ENCODE measurements at regions of chr16 and their contacts with region 1.

Region 1: DNA sequence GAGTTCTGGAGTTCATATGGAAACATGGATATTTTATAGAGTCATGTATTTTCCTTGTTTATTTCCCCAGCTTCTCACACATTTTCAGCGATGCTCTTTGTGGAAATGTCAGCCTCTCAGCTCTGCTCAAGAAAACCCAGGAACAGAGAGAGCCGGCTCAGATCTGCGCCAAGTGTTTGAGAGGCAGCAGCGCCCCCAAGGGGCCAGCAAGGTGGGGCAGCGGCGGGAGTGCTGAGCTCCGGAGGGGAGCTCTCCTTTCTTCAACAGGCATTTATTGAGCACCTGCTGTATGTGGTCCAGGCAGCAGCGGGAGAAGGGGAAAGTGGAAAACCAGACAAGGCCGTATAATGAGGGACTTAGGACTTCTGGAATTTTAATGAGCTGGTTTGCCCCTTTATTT is 421.1 kb upstream of the C16orf82 start:
- DNase-seq: peak; percentile 73
- H3K4me3 ChIP-seq: no peak overlapping the region
- H3K27ac ChIP-seq: no peak overlapping the region
- H3K4me1 ChIP-seq: peaks cover 10% of the 10 kb centered on the region
- H3K27me3 ChIP-seq: no peaks in the 10 kb centered on the region
- CTCF ChIP-seq: peak; percentile 93

Region 2: DNA sequence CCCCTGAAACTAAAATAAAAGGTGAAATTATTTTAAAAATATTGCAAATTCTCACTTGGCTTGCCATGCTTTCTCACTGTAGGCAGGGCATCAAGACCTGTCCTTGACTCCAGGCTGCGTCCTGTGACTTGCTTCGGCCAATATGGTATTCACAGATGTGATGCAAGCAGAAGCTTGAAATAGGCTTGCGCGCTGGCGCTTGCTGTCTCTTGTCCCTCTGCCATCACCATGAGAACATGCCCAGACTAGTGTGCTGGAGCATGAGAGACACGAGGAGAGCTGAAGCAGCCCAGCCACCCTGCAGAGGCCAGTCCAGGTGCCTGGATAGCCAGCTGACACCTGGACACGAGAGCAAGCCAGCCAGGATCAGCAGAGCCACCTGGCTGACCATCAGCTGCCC is 1366.1 kb before region 1 on chr16:
- CTCF ChIA-PET with region 1: no interaction called
- POLR2A ChIA-PET with region 1: no interaction called
- intact Hi-C with region 1: loop called (anchors 5 kb)
- DNase-seq: no peak
- H3K4me3 ChIP-seq: no peak overlapping the region
- H3K27ac ChIP-seq: no peak overlapping the region
- H3K4me1 ChIP-seq: no peaks in the 10 kb centered on the region
- H3K27me3 ChIP-seq: no peaks in the 10 kb centered on the region
- CTCF ChIP-seq: no peak

Region 3: DNA sequence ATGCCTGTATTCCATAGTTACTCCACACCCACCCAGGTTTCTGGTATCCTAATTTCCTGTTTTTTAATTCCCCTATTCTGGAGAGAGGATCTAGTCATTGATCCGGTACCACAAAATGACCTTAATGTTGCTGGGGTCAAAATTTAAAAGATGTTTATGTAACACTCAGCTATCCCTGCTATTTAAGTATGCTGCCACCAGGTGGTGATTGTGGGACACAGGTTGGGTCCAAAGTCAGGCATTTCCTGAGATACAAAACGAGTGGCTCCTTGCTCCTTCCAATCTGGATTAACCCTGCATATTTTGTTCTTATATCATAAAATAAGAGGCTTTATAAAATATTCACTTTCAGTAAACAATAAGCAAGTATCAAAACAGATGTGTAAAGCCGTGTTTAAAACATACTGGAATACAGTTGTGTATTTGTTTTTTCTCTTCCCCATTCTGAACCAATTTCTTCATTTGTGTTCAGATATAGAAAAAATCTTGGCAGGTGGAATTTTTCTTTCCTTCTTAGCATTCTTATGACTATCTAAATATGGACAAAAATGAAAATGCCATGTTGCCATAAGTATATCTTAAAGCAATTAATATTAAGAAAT is 937.5 kb before region 1 on chr16:
- CTCF ChIA-PET with region 1: no interaction called
- POLR2A ChIA-PET with region 1: no interaction called
- intact Hi-C with region 1: loop called (anchors 10 kb)
- DNase-seq: peak; percentile 79
- H3K4me3 ChIP-seq: no peak overlapping the region
- H3K27ac ChIP-seq: no peak overlapping the region
- H3K4me1 ChIP-seq: peaks cover 46% of the 10 kb centered on the region
- H3K27me3 ChIP-seq: no peaks in the 10 kb centered on the region
- CTCF ChIP-seq: peak; percentile 77

Region 4: DNA sequence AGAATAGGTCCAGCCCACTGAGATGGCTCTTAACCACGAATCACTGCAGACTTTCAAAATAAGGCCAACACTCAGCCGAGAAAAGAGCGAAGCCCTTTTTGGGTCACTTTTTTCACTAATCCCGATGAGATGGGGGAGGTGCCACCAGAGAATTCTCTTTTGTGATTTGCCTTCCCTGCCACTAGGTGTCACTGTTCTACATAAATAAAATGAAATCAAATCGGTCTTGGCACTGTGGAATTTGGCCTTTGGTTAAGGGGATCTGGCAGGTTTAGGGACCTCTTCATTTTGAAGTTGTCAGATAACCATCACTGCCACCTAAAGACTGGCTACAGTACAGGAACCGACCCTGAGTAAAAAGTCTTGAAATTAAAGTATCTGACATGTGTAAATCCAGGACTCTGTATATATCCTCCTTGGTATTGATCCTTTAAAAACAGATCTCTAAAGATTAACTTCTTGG is 806.9 kb before region 1 on chr16:
- CTCF ChIA-PET with region 1: no interaction called
- POLR2A ChIA-PET with region 1: no interaction called
- intact Hi-C with region 1: loop called (anchors 5 kb)
- DNase-seq: peak; percentile 90
- H3K4me3 ChIP-seq: peak overlapping the region; percentile 29
- H3K27ac ChIP-seq: peak overlapping the region; percentile 2
- H3K4me1 ChIP-seq: peaks cover 38% of the 10 kb centered on the region
- H3K27me3 ChIP-seq: no peaks in the 10 kb centered on the region
- CTCF ChIP-seq: peak; percentile 81

Region 5: DNA sequence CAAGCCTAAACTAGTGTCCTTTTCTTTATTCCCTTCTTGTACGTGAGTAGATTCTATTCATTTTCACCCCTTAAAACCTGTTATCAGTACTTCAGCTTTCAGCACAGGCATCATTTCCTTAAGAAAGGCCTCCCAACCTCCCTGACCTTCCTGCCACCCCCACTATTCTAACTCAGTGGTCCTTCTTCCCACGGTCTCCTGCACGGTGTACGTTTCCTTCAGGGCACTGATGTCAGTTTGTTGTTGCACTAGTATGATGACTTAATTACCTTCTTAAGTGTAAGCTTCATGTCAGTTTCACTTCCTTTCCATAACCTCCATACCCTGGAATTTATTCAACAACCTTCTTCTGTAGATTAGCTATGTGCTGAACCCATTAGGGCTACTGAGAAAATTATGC is 469.7 kb before region 1 on chr16:
- CTCF ChIA-PET with region 1: no interaction called
- POLR2A ChIA-PET with region 1: no interaction called
- intact Hi-C with region 1: no loop called
- DNase-seq: peak; percentile 7
- H3K4me3 ChIP-seq: no peak overlapping the region
- H3K27ac ChIP-seq: no peak overlapping the region
- H3K4me1 ChIP-seq: peaks cover 10% of the 10 kb centered on the region
- H3K27me3 ChIP-seq: no peaks in the 10 kb centered on the region
- CTCF ChIP-seq: no peak

Region 6: GRCh38 chr16:26281381-26282110 is 364.1 kb before region 1 on chr16:
- CTCF ChIA-PET with region 1: no interaction called
- POLR2A ChIA-PET with region 1: no interaction called
- intact Hi-C with region 1: no loop called
- DNase-seq: no peak
- H3K4me3 ChIP-seq: no peak overlapping the region
- H3K27ac ChIP-seq: no peak overlapping the region
- H3K4me1 ChIP-seq: no peaks in the 10 kb centered on the region
- H3K27me3 ChIP-seq: no peaks in the 10 kb centered on the region
- CTCF ChIP-seq: no peak

Region 7: DNA sequence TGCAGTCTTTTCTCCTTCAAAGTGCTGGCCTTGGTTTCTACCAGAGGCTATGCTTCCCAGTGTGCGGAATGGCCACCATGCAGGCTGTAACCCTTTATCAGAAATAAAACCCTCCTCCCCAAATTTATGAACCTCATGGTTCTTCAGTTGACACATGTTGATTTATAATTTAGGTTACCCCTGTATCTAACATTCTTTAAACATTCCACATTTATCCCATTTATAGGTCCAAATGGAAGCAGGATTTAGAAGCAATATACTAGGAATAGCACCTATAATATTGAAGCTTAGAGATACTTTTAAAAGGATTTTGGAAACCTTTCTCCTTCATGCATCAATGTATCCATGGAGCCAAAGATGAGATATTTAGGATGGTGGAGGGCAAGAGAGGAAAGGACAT is 17.7 kb before region 1 on chr16:
- CTCF ChIA-PET with region 1: no interaction called
- POLR2A ChIA-PET with region 1: no interaction called
- intact Hi-C with region 1: no loop called
- DNase-seq: no peak
- H3K4me3 ChIP-seq: no peak overlapping the region
- H3K27ac ChIP-seq: no peak overlapping the region
- H3K4me1 ChIP-seq: no peaks in the 10 kb centered on the region
- H3K27me3 ChIP-seq: no peaks in the 10 kb centered on the region
- CTCF ChIP-seq: no peak

Measured in A673 (cell line).